Right ventricle myocardium superior (tissue), 1 donor: ENCODE measurements at regions of chr2 and their contacts with region 1.

Region 1: GRCh38 chr2:101831351-101831865 is 133.9 kb downstream of the MAP4K4 start:
- DNase-seq: peak; percentile 76
- ATAC-seq: peak; percentile 87

Region 2: DNA sequence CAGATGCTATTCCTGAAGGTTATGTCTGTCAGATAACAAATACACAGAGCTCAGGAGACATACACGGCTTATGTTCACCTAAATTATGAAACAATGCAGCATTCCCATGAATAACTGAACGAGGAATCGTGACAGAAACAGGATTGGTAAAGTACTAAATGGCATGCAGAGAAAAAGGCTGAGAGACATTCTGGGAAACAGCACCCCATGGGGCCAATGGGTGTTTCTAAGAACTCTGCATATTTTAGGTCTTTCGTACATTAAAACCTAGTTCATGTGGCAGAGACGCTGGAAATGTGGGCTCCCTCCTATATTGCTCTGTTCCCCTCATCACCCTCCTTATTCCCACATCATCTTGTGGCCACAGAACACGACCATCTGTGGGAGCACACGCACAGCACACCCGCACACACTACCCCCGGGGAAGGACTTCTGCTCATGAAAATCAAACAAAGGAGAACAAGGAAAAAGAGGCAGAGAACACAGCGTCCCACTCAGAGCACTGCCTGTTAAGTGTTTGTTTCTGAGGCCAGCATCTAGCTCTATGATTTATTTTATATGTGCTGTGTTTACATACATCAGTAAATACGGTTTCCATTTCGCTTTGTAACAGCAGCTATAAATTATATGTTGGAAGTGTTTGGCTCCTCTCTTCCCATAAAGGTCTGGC is 1832.6 kb before region 1 on chr2:
- intact Hi-C with region 1: no loop called
- DNase-seq: no peak
- ATAC-seq: no peak

Region 3: GRCh38 chr2:101341901-101342624 is 489.3 kb before region 1 on chr2:
- intact Hi-C with region 1: loop called (anchors 10 kb)
- DNase-seq: peak; percentile 81
- ATAC-seq: peak; percentile 73

Region 4: GRCh38 chr2:101419096-101419663 is 412.2 kb before region 1 on chr2:
- intact Hi-C with region 1: loop called (anchors 5 kb)
- DNase-seq: no peak
- ATAC-seq: peak; percentile 83

Region 5: GRCh38 chr2:101518578-101519492 is 312.6 kb before region 1 on chr2:
- intact Hi-C with region 1: loop called (anchors 5 kb)
- DNase-seq: peak; percentile 53
- ATAC-seq: peak; percentile 91

Region 6: GRCh38 chr2:101697124-101698013 is 134.0 kb before region 1 on chr2 and contains the start of gene MAP4K4:
- intact Hi-C with region 1: loop called (anchors 5 kb)
- DNase-seq: peak; percentile 92
- ATAC-seq: peak; percentile 90
- total RNA-seq, gene MAP4K4: 76.9 TPM

Region 7: GRCh38 chr2:101751875-101752619 is 79.4 kb before region 1 on chr2:
- intact Hi-C with region 1: no loop called
- DNase-seq: no peak
- ATAC-seq: peak; percentile 38

Region 8: DNA sequence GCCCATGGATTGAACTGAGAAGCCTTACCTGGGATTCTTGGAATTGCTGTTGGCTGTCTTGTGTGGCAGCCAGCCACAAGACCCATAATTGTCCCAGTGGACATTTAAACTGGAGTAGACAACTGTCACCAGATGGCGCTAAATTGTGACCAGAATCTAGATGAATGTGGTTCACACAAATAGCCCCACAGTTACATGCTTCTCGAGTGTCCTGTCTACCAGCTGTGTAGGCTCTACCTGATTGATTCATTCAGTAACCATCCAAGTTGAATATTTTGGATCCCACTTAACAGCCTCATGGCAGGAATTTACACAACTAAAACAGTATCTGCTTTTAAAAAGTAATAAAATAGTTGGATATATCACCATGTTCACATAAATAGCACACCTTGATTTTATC is 60.7 kb before region 1 on chr2:
- intact Hi-C with region 1: no loop called
- DNase-seq: no peak
- ATAC-seq: peak; percentile 42